H1 (cell line): ENCODE measurements at regions of chr9 and their contacts with region 1.

Region 1: DNA sequence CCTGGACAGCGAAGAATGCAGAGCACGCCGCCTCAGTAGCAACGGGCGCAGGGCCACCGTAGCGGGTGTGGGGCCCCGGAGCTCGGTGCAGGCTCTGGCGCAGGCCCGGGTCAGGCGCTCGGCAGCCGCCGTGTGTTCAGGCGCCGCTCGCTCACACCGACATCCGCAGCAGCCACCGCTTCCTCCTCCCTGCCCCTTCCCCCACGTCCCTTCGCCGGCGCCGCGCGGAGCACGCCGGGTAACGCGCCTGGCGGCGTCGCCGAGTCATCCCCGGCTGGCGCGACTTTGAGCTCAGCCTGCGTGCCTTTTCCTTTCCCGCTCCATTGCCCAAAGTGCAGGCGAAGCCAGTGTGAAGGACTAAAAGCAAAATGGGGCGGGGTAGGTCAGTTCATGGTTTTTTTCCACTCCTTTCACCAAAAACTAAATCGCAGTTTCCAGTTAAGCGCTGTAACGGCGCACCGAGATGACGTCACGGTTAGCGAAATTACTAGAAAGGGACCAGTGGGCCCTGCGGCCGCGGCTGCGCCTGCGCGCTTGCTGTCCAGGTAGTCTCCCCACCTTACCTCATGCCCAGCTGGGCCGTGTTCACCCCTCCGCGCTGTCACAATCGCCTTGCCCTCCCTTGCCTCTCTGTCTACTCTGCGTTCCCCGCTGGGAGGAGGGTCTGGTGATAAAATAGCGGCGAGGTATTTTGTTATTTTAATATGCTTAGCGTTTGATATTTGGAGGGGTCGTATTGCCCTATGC is at the start of gene UBQLN1:
- DNase-seq: peak; percentile 66 to 92
- H3K4me3 ChIP-seq: peak within 1 kb of the TSS; percentile 79 to 99 (median 93)
- H3K27ac ChIP-seq: peak within 1 kb of the TSS; percentile 100
- H3K4me1 ChIP-seq: no peaks in the 10 kb centered on the region; a peak in 1 of 7 replicates
- H3K27me3 ChIP-seq: no peaks in the 10 kb centered on the region
- CTCF ChIP-seq: no peak
- EP300 ChIP-seq: 0 out of 3 replicates have a peak, but pooled peaks of 1 of the 2 experiments have one; percentile 22
- POLR2A ChIP-seq: peak; percentile 91 to 97
- RAD21 ChIP-seq: no peak
- total RNA-seq, gene UBQLN1: 101 and 105 TPM in 2 replicates

Region 2: GRCh38 chr9:83554278-83554677 is 153.7 kb before region 1 on chr9:
- CTCF ChIA-PET with region 1: no interaction called
- POLR2A ChIA-PET with region 1: no interaction called
- DNase-seq: no peak
- H3K4me3 ChIP-seq: no peak overlapping the region
- H3K27ac ChIP-seq: no peak overlapping the region
- H3K4me1 ChIP-seq: no peaks in the 10 kb centered on the region
- H3K27me3 ChIP-seq: no peaks in the 10 kb centered on the region
- CTCF ChIP-seq: no peak
- EP300 ChIP-seq: no peak
- POLR2A ChIP-seq: no peak
- RAD21 ChIP-seq: no peak

Region 3: DNA sequence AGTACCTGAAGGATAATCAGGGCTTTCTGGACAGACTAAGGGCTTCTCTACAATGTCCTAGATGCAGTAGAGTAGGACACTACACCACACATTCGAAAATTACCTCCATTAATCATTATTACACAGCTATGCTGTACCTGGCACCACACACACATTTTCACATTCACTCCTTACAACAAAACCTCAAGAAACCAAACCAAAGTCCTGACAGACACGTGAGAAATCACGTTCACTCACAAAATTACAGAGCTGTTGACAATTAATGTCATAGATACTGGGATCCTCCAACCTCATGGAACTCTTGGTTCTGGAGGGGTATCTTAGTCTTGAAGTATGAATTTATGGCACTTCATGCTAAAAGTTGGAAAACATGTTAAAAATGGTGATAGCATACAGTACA is 16.4 kb before region 1 on chr9:
- CTCF ChIA-PET with region 1: interaction called, 3 read pairs
- POLR2A ChIA-PET with region 1: interaction called, 15 read pairs
- DNase-seq: no peak
- H3K4me3 ChIP-seq: no peak overlapping the region
- H3K27ac ChIP-seq: no peak overlapping the region
- H3K4me1 ChIP-seq: no peaks in the 10 kb centered on the region
- H3K27me3 ChIP-seq: no peaks in the 10 kb centered on the region
- CTCF ChIP-seq: no peak
- EP300 ChIP-seq: no peak
- POLR2A ChIP-seq: no peak
- RAD21 ChIP-seq: no peak